ENCODE measurements at regions of chr17 and their contacts with region 1.

Region 1: GRCh38 chr17:28552246-28552999 is at the start of gene UNC119:
- DNase-seq: peak; percentile 88
- H3K4me3 Mint-ChIP-seq: peak within 1 kb of the TSS; percentile 88
- H3K27ac Mint-ChIP-seq: peak within 1 kb of the TSS; percentile 65
- H3K4me1 Mint-ChIP-seq: peaks cover 49% of the 10 kb centered on the region
- H3K27me3 Mint-ChIP-seq: no peaks in the 10 kb centered on the region
- total RNA-seq, gene UNC119: 38.0 to 42.0 TPM

Region 2: DNA sequence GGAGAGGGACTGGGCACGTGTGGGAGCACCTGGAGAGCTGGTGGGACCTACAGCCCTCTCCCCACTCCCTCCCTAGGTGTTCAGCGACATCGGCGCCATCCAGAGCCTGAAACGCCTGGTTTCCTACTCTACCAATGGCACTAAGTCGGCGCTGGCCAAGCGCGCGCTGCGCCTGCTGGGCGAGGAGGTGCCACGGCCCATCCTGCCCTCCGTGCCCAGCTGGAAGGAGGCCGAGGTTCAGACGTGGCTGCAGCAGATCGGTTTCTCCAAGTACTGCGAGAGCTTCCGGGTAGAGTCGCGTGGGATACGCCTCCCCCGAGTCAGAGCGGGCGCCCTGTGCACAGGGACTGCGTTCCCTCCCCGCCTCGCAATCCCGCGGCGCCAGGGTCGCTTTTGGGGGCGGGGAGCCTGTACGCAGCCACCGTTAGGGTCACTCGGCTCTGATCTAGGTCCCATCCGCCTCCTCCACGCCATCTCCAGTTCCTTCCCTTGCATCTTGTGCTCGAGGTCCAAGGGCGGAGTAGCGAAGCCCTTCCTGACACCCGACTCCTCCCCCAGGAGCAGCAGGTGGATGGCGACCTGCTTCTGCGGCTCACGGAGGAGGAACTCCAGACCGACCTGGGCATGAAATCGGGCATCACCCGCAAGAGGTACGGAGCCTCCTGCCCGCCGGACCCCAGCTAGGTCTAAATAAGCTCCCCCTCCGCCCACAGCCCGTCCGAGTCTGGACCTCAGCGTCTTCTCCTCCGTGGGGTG is 168.0 kb before region 1 on chr17:
- CTCF ChIA-PET with region 1: no interaction called
- POLR2A ChIA-PET with region 1: interaction called, 3 read pairs
- intact Hi-C with region 1: loop called (anchors 10 kb)
- DNase-seq: peak; percentile 84
- H3K4me3 Mint-ChIP-seq: peak overlapping the region; percentile 88
- H3K27ac Mint-ChIP-seq: peak overlapping the region; percentile 59
- H3K4me1 Mint-ChIP-seq: peaks cover 25% of the 10 kb centered on the region
- H3K27me3 Mint-ChIP-seq: no peaks in the 10 kb centered on the region

Region 3: GRCh38 chr17:28540231-28540630 is 12.2 kb before region 1 on chr17:
- CTCF ChIA-PET with region 1: interaction called, 21 read pairs
- POLR2A ChIA-PET with region 1: no interaction called
- intact Hi-C with region 1: no loop called
- DNase-seq: no peak
- H3K4me3 Mint-ChIP-seq: no peak overlapping the region
- H3K27ac Mint-ChIP-seq: no peak overlapping the region
- H3K4me1 Mint-ChIP-seq: no peaks in the 10 kb centered on the region
- H3K27me3 Mint-ChIP-seq: no peaks in the 10 kb centered on the region

Region 4: DNA sequence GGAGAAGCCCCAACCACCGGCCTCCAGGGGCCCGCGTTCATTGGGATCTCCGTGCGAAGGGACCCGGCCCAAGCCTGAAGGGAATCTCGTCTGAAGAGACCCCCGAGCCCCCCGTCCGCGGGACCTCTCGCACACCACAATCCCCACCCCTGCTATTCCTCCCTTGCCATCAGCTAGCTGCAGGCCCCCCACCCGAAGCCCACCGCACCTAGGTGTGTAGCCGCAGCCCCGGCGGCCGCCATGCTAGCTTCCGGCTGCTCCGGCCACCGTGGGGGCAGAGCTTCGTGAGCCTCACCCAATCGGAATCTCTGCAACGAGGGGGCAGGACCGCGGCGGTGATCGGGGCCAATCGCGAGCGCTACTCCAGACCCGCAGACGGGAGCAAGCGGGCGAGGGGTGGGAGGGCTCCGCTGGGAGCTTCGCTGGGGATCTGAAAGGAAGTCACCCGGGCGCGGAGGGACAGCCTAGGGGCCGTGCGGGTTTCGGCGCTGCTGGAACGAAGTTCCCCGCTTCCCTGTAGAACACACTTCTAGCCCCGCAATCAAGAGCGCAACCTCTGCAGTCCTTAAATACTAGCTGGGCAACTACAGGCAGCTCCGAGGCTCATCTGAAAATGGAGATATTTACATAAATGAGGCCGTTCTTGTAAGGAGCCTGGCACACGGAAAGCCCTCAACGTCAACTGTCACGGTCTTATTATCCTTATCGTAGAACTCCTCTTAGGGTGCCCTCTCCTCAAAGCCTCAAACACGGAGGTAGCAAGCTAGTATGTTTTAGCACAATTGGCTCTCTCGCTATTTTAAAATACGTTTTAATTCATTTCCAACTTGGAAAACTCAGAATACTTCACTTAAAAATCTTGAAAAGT is 19.1 kb after region 1 on chr17 and contains the start of gene PIGS:
- CTCF ChIA-PET with region 1: interaction called, 53 read pairs
- POLR2A ChIA-PET with region 1: interaction called, 11 read pairs
- intact Hi-C with region 1: loop called (anchors 2 kb)
- DNase-seq: peak; percentile 96
- H3K4me3 Mint-ChIP-seq: peak within 1 kb of the TSS; percentile 96
- H3K27ac Mint-ChIP-seq: peak within 1 kb of the TSS; percentile 89
- H3K4me1 Mint-ChIP-seq: peaks cover 55% of the 10 kb centered on the region
- H3K27me3 Mint-ChIP-seq: no peaks in the 10 kb centered on the region
- total RNA-seq, gene PIGS: 36.6 to 38.6 TPM

Region 5: GRCh38 chr17:28598799-28599310 is 46.4 kb after region 1 on chr17 and contains the start of gene SPAG5:
- CTCF ChIA-PET with region 1: interaction called, 4 read pairs
- POLR2A ChIA-PET with region 1: interaction called, 7 read pairs
- intact Hi-C with region 1: loop called (anchors 1 kb)
- DNase-seq: peak; percentile 97
- H3K4me3 Mint-ChIP-seq: peak within 1 kb of the TSS; percentile 93
- H3K27ac Mint-ChIP-seq: peak within 1 kb of the TSS; percentile 93
- H3K4me1 Mint-ChIP-seq: peaks cover 21% of the 10 kb centered on the region
- H3K27me3 Mint-ChIP-seq: no peaks in the 10 kb centered on the region
- total RNA-seq, gene SPAG5: 153 to 159 TPM

Region 6: GRCh38 chr17:28777178-28777577 is 224.8 kb after region 1 on chr17:
- CTCF ChIA-PET with region 1: no interaction called
- POLR2A ChIA-PET with region 1: no interaction called
- intact Hi-C with region 1: no loop called
- DNase-seq: no peak
- H3K4me3 Mint-ChIP-seq: no peak overlapping the region
- H3K27ac Mint-ChIP-seq: no peak overlapping the region
- H3K4me1 Mint-ChIP-seq: peaks cover 37% of the 10 kb centered on the region
- H3K27me3 Mint-ChIP-seq: no peaks in the 10 kb centered on the region

Measured in activated CD4-positive, alpha-beta memory T cell treated with anti-CD3 and anti-CD28 coated beads for 36 hours (primary cell).